IMR-90 (cell line): ENCODE measurements at regions of chr5 and their contacts with region 1.

Region 1: DNA sequence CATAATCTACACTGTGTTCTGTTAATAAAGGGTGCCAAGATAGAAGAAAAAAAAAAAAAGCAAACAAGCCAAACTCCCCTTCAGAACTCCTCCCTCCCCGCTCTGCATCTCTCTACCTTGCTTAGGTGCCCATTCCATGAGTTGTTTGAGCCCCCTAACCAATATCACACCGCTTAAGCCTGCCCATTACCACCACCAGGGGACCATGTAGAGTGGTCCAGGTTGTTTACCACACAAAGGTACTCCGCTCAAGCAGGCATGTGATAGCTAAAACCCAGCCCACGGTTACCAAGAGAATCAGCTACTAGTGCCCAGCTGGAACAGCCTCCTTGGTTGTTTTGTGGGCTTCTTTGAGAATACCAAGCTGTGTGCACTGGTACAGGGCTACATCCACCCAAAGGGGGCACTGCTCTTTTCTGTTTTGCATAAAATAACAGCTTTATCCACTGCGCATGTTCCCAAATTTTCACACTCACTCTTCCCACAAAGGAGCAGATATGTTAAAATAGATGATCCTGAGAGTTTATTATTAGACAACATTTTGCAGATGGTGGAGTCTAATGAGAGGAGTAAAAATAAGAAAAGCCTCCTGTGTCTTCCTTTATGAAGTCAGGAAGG is 304.1 kb downstream of the DEPDC1B start:
- DNase-seq: no peak
- ATAC-seq: no peak
- H3K4me3 ChIP-seq: no peak overlapping the region
- H3K27ac ChIP-seq: no peak overlapping the region
- H3K4me1 ChIP-seq: no peaks in the 10 kb centered on the region
- H3K27me3 ChIP-seq: no peaks in the 10 kb centered on the region
- CTCF ChIP-seq: 0 out of 2 replicates have a peak, but pooled peaks have one; percentile 3
- POLR2A ChIP-seq: no peak
- RAD21 ChIP-seq: no peak

Region 2: DNA sequence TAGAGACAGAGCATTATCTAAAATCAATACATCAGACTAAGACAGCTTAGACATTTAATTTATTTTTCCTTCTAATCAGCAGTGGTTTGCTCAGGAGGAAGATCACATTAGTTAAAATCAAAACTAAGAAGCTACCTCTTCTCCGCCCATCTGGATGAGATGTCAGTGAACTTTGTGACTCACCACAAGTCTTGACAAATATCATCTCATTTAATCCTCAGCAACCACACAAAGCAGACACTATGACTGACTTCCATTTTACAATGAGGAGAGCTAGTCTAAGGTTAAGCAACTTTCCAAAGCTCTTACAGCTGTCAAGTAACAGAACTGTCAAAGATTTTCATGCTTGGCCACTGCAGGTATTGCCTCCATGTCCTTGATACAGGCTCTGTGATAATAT is 14.6 kb after region 1 on chr5:
- CTCF ChIA-PET with region 1: no interaction called
- POLR2A ChIA-PET with region 1: no interaction called
- dilution Hi-C with region 1: no loop called
- in situ Hi-C with region 1: no loop called
- intact Hi-C with region 1: no loop called
- DNase-seq: no peak
- ATAC-seq: no peak
- H3K4me3 ChIP-seq: no peak overlapping the region
- H3K27ac ChIP-seq: no peak overlapping the region
- H3K4me1 ChIP-seq: no peaks in the 10 kb centered on the region
- H3K27me3 ChIP-seq: no peaks in the 10 kb centered on the region
- CTCF ChIP-seq: no peak
- POLR2A ChIP-seq: no peak
- RAD21 ChIP-seq: no peak

Region 3: DNA sequence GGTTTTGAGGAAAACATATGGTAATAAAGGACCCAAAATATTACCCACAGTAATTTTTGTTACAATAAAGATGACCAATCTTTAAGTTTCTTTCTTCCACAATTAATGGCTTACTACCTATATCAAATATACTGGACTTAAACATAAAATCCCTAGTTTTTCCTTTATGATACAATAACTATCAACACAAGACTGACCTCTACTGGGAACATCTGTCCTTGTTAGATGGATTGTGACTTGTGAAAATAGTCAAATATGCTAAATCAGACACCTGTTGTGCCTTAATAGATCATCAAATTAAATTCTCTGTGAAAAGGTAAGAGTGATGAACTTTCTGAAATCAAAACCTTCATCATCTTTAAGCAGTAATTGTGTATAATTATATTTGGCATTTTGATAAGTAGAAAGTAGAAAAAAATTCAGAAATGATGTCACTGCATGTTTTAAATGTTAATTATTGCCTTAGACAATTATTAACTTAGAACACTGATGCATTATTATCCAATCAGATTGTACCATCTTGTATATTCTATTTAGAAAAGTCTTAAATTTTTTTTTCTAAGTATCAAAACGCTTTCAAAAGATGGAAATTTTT is 190.6 kb after region 1 on chr5:
- CTCF ChIA-PET with region 1: no interaction called
- POLR2A ChIA-PET with region 1: no interaction called
- dilution Hi-C with region 1: no loop called
- in situ Hi-C with region 1: no loop called
- intact Hi-C with region 1: loop called (anchors 5 kb)
- DNase-seq: peak; percentile 50
- ATAC-seq: peak; percentile 53; the same call in 1 of the 2 replicates
- H3K4me3 ChIP-seq: no peak overlapping the region
- H3K27ac ChIP-seq: no peak overlapping the region
- H3K4me1 ChIP-seq: no peaks in the 10 kb centered on the region
- H3K27me3 ChIP-seq: no peaks in the 10 kb centered on the region
- CTCF ChIP-seq: peak; percentile 51
- POLR2A ChIP-seq: no peak
- RAD21 ChIP-seq: peak; percentile 50

Region 4: DNA sequence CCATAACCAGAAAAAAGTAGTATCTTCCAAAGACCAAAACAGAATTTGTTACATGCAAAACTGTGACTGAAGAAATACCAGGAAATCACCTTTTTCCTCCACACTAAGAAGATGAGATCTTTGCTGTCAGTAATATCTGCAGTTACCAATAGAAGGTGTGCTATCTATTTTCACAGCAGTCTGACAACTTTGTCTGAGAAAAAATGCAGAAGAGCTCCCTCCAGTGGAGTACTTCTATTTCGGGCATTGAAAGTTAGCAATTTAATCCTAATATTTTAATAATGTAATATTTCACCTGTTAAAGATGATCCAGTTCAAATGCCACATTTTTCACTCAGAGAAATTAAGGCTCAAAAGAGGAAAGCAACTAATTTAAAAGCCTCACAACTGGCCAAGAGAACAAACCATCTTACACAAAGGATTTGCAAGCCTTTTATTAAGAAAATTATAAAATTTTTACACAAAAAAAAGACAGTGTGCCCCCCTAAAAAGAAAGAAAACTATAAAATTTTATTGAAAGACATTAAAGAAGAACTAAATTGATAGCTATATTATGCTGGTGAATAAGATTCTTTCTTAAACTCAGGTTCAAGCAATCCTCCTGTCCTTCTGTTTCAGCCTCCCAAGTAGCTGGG is 253.6 kb after region 1 on chr5:
- CTCF ChIA-PET with region 1: no interaction called
- POLR2A ChIA-PET with region 1: no interaction called
- dilution Hi-C with region 1: no loop called
- in situ Hi-C with region 1: no loop called
- intact Hi-C with region 1: loop called (anchors 10 kb)
- DNase-seq: peak; percentile 51
- ATAC-seq: peak; percentile 34
- H3K4me3 ChIP-seq: no peak overlapping the region
- H3K27ac ChIP-seq: no peak overlapping the region
- H3K4me1 ChIP-seq: no peaks in the 10 kb centered on the region
- H3K27me3 ChIP-seq: no peaks in the 10 kb centered on the region
- CTCF ChIP-seq: peak; percentile 69
- POLR2A ChIP-seq: no peak
- RAD21 ChIP-seq: peak; percentile 52

Region 5: DNA sequence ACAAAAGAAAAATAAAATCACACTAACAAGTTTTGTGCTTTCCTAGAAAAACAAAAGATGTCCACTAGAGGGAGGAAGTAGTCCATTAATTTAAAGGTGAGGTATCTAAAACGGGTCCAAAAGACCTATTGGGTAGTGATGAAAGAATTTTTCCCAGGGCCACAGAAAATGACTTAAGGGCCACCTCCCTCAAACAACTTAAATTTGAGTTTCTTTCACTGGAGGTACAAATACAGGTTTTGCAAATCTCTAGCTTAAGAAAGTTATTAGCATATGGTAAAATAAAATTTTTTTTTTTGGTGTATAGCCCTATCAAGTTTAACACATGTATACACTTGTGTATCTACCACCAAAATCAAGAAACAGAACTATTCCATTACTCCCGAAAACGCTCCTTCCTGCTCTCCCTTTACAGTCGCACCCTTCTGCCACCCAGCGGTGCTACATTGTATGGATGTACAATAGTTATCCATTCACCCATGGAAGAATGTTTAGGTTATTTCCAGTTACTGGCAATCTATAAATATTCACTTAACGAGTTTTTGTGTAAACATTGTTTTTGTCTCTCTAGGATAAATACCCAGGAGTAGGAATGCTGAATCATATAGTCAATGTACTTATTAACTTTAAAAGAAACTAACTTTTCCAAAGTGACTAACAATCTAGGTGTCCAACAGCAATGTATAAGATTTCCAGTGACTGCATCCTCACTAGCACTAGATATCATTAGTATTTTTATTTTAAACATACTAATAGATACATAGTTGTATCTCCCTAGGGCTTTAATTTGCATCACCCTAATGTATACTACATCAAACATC is 282.2 kb after region 1 on chr5:
- CTCF ChIA-PET with region 1: no interaction called
- POLR2A ChIA-PET with region 1: no interaction called
- dilution Hi-C with region 1: no loop called
- in situ Hi-C with region 1: no loop called
- intact Hi-C with region 1: no loop called
- DNase-seq: peak; percentile 58
- ATAC-seq: peak; percentile 68
- H3K4me3 ChIP-seq: no peak overlapping the region
- H3K27ac ChIP-seq: peak overlapping the region; percentile 29; the same call in 1 of the 2 replicates
- H3K4me1 ChIP-seq: peaks cover 6% of the 10 kb centered on the region; the same call in 1 of the 2 replicates
- H3K27me3 ChIP-seq: no peaks in the 10 kb centered on the region
- CTCF ChIP-seq: peak; percentile 63
- POLR2A ChIP-seq: no peak
- RAD21 ChIP-seq: peak; percentile 52

Region 6: GRCh38 chr5:60722416-60722815 is 326.6 kb after region 1 on chr5:
- CTCF ChIA-PET with region 1: no interaction called
- POLR2A ChIA-PET with region 1: no interaction called
- dilution Hi-C with region 1: no loop called
- in situ Hi-C with region 1: no loop called
- intact Hi-C with region 1: no loop called
- DNase-seq: no peak
- ATAC-seq: no peak
- H3K4me3 ChIP-seq: no peak overlapping the region
- H3K27ac ChIP-seq: no peak overlapping the region
- H3K4me1 ChIP-seq: no peaks in the 10 kb centered on the region
- H3K27me3 ChIP-seq: no peaks in the 10 kb centered on the region
- CTCF ChIP-seq: no peak
- POLR2A ChIP-seq: no peak
- RAD21 ChIP-seq: no peak